ENCODE measurements at regions of chr17 and their contacts with region 1.

Region 1: GRCh38 chr17:29140051-29140621 is 40.1 kb downstream of the MYO18A start:
- DNase-seq: peak; percentile 73 to 94 (median 87)
- H3K4me3 ChIP-seq: peak overlapping the region; percentile 72 to 96 (median 75)
- H3K4me3 Mint-ChIP-seq: peak overlapping the region; percentile 87 to 98
- H3K27ac ChIP-seq: peak overlapping the region; percentile 78 to 90
- H3K27ac Mint-ChIP-seq: peak overlapping the region; percentile 93 to 99 (median 96)
- H3K4me1 ChIP-seq: peaks cover 62 to 87% of the 10 kb centered on the region in 2 donors
- H3K4me1 Mint-ChIP-seq: peaks cover 68% of the 10 kb centered on the region
- H3K27me3 ChIP-seq: no peaks in the 10 kb centered on the region
- H3K27me3 Mint-ChIP-seq: no peaks in the 10 kb centered on the region
- CTCF ChIP-seq: no peak

Region 2: GRCh38 chr17:29124117-29124924 is 15.8 kb before region 1 on chr17:
- intact Hi-C with region 1: loop called (anchors 1 to 2 kb)
- DNase-seq: peak; percentile 53 to 69 (median 68)
- H3K4me3 ChIP-seq: no peak overlapping the region
- H3K4me3 Mint-ChIP-seq: no peak overlapping the region
- H3K27ac ChIP-seq: peak overlapping the region; percentile 2 to 77
- H3K27ac Mint-ChIP-seq: peak overlapping the region in 3 of 7 donors; percentile 42 to 76 (median 46)
- H3K4me1 ChIP-seq: peaks cover 37 to 43% of the 10 kb centered on the region in 2 donors
- H3K4me1 Mint-ChIP-seq: peaks cover 34% of the 10 kb centered on the region
- H3K27me3 ChIP-seq: no peaks in the 10 kb centered on the region
- H3K27me3 Mint-ChIP-seq: peaks cover 0 to 1% (median 0%) of the 10 kb centered on the region in 3 donors
- CTCF ChIP-seq: peak; percentile 77